ENCODE measurements at regions of chr20 and their contacts with region 1.

Region 1: GRCh38 chr20:57495985-57496384 is 29.0 kb downstream of the CTCFL start:
- DNase-seq: no peak
- H3K4me3 ChIP-seq: no peak overlapping the region
- H3K27ac ChIP-seq: no peak overlapping the region
- H3K4me1 ChIP-seq: no peaks in the 10 kb centered on the region
- H3K27me3 ChIP-seq: no peaks in the 10 kb centered on the region
- CTCF ChIP-seq: no peak
- POLR2A ChIP-seq: no peak

Region 2: GRCh38 chr20:57383447-57384347 is 112.3 kb before region 1 on chr20:
- intact Hi-C with region 1: loop called (anchors 2 kb)
- DNase-seq: no peak
- H3K4me3 ChIP-seq: no peak overlapping the region
- H3K27ac ChIP-seq: no peak overlapping the region
- H3K4me1 ChIP-seq: no peaks in the 10 kb centered on the region
- H3K27me3 ChIP-seq: no peaks in the 10 kb centered on the region
- CTCF ChIP-seq: no peak
- POLR2A ChIP-seq: no peak